ENCODE measurements at regions of chr6 and their contacts with region 1.

Region 1: GRCh38 chr6:14770572-14770971 is 475.3 kb upstream of the JARID2 start:
- DNase-seq: no peak
- H3K4me3 ChIP-seq: no peak overlapping the region
- H3K27ac ChIP-seq: no peak overlapping the region
- H3K4me1 ChIP-seq: 0 out of 2 replicates have a peak, but pooled peaks cover 2% of the 10 kb centered on the region
- H3K27me3 ChIP-seq: no peaks in the 10 kb centered on the region
- CTCF ChIP-seq: no peak

Region 2: GRCh38 chr6:14082771-14083170 is 687.8 kb before region 1 on chr6:
- CTCF ChIA-PET with region 1: no interaction called
- POLR2A ChIA-PET with region 1: interaction called, 11 read pairs
- intact Hi-C with region 1: no loop called
- DNase-seq: no peak
- H3K4me3 ChIP-seq: no peak overlapping the region
- H3K27ac ChIP-seq: no peak overlapping the region
- H3K4me1 ChIP-seq: no peaks in the 10 kb centered on the region
- H3K27me3 ChIP-seq: no peaks in the 10 kb centered on the region
- CTCF ChIP-seq: no peak

Region 3: GRCh38 chr6:14333556-14334305 is 436.8 kb before region 1 on chr6:
- CTCF ChIA-PET with region 1: no interaction called
- POLR2A ChIA-PET with region 1: no interaction called
- intact Hi-C with region 1: no loop called
- DNase-seq: no peak
- H3K4me3 ChIP-seq: no peak overlapping the region
- H3K27ac ChIP-seq: no peak overlapping the region
- H3K4me1 ChIP-seq: no peaks in the 10 kb centered on the region
- H3K27me3 ChIP-seq: no peaks in the 10 kb centered on the region
- CTCF ChIP-seq: no peak

Region 4: DNA sequence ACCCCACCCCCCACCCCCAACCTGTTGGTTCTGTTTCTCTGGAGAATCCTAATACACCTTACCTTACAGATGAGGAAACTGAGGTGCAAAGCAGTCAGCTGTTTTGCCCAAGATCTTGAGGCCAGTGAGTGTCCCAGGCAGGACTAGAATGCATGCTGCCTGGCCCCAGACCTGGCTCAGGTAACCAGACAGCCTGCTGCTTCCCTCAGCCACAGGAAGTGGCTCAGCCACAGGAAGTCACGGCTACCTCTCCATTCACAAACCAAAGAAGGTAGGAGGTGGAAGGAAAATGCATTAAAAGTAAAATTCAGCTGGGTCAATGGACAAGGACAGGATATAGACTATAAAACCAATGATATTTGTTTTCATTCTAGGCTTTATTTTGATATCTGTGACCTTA is 135.4 kb before region 1 on chr6:
- CTCF ChIA-PET with region 1: no interaction called
- POLR2A ChIA-PET with region 1: no interaction called
- intact Hi-C with region 1: no loop called
- DNase-seq: no peak
- H3K4me3 ChIP-seq: no peak overlapping the region
- H3K27ac ChIP-seq: no peak overlapping the region
- H3K4me1 ChIP-seq: no peaks in the 10 kb centered on the region
- H3K27me3 ChIP-seq: no peaks in the 10 kb centered on the region
- CTCF ChIP-seq: no peak

Region 5: DNA sequence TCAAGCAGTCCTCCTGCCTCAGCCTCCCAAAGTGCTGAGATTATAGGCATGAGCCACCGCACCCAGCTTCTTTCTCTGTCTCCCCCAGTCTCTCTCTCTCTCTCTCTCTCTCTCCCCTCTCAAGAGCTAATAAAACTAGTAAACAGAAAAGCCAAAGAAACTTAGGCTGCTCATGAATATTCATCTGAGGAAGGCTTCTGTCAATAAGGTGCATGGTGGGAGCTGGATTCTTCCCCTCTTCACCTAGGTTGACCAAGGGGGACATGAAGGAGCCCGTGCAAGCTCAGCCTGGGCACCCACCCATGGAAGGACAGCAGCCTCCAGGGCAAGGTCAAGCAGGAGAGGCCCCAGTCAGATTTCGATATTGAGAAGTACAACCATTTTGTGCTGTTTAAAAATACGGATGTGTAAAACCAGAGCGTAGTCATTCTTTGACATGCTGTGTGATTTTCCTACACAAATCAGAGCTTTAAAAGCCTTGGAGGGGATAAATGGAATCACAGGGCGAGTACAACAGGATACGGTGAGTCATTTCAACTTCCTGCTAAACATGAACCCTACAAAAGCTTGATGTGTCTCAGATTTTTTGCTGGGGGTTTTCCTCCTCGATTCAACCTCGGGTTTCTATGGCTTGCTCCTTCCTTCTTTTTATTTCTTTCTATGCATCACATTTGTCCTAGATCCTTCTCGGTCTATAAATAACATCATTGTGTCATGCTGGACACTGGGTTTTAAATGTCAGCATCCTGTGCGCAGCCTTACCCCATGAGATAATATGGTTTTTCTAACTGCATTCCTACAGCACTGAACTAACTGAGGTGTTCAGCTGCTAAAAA is 106.4 kb after region 1 on chr6:
- CTCF ChIA-PET with region 1: no interaction called
- POLR2A ChIA-PET with region 1: no interaction called
- intact Hi-C with region 1: loop called (anchors 5 kb)
- DNase-seq: peak; percentile 30 to 73
- H3K4me3 ChIP-seq: no peak overlapping the region
- H3K27ac ChIP-seq: peak overlapping the region; percentile 78
- H3K4me1 ChIP-seq: peaks cover 28% of the 10 kb centered on the region
- H3K27me3 ChIP-seq: no peaks in the 10 kb centered on the region
- CTCF ChIP-seq: no peak

Region 6: GRCh38 chr6:15280028-15280427 is 509.5 kb after region 1 on chr6:
- CTCF ChIA-PET with region 1: no interaction called
- POLR2A ChIA-PET with region 1: no interaction called
- intact Hi-C with region 1: loop called (anchors 5 kb)
- DNase-seq: no peak
- H3K4me3 ChIP-seq: no peak overlapping the region
- H3K27ac ChIP-seq: 0 out of 2 replicates have a peak overlapping the region, but pooled peaks have one; percentile 31
- H3K4me1 ChIP-seq: peaks cover 48% of the 10 kb centered on the region
- H3K27me3 ChIP-seq: no peaks in the 10 kb centered on the region
- CTCF ChIP-seq: no peak

Measured in PC-9 (cell line).